Activated T-helper 2 cell treated with anti-CD3 and anti-CD28 coated beads, Interferon-gamma antibody, Interleukin-2, Interleukin-4, amounts not matched to agents 10 μg/mL and 5 μg/mL and 100 μg/mL, durations not matched to agents 14 hours and 24 hours and 36 hours (primary cell): ENCODE measurements at regions of chr1 and their contacts with region 1.

Region 1: GRCh38 chr1:54406339-54407153 is at the start of gene SSBP3:
- DNase-seq: peak; percentile 91
- H3K4me3 Mint-ChIP-seq: peak within 1 kb of the TSS; percentile 90
- H3K27ac Mint-ChIP-seq: peak within 1 kb of the TSS; percentile 94
- H3K4me1 Mint-ChIP-seq: peaks cover 58% of the 10 kb centered on the region
- H3K27me3 Mint-ChIP-seq: no peaks in the 10 kb centered on the region
- total RNA-seq, gene SSBP3: 84.4 and 89.9 TPM in 2 replicates

Region 2: DNA sequence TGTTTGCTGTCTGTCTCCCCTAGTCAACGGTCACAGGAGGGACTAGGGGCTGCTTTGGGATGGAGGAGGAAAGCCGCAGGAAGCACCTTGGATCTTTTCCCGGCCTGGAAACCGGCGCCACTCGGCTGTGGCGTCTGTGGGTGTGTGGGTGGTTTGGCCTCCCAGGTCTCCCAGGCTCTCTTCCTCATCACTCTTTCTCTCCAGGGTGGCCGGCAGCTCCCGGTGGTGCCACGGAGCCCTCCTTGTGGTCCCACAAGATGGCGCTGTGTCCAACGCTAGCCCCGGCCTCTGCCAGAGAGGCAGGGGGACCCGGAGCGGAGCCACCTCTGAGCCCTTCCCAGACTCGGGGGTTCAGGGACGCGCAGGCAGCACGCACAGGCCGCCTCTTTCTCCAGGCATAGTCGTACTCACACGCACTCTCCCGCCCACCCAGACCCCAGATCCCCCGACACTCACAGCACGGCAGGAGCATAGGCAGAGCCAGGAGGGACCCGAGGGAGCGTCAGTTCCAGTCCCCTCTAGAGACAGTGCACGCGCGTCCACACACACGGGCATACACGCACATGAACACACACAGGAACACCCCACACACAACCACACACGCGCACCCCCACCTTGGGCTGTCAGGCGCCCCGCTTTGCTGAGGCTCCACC is 284.9 kb before region 1 on chr1:
- intact Hi-C with region 1: loop called (anchors 2 kb)
- DNase-seq: peak; percentile 55
- H3K4me3 Mint-ChIP-seq: no peak overlapping the region
- H3K27ac Mint-ChIP-seq: no peak overlapping the region
- H3K4me1 Mint-ChIP-seq: peaks cover 2% of the 10 kb centered on the region
- H3K27me3 Mint-ChIP-seq: peaks cover 2% of the 10 kb centered on the region

Region 3: GRCh38 chr1:54287176-54287650 is 119.3 kb before region 1 on chr1:
- intact Hi-C with region 1: loop called (anchors 1 kb)
- DNase-seq: peak; percentile 77
- H3K4me3 Mint-ChIP-seq: peak overlapping the region; percentile 74
- H3K27ac Mint-ChIP-seq: peak overlapping the region; percentile 96
- H3K4me1 Mint-ChIP-seq: peaks cover 72% of the 10 kb centered on the region
- H3K27me3 Mint-ChIP-seq: no peaks in the 10 kb centered on the region

Region 4: DNA sequence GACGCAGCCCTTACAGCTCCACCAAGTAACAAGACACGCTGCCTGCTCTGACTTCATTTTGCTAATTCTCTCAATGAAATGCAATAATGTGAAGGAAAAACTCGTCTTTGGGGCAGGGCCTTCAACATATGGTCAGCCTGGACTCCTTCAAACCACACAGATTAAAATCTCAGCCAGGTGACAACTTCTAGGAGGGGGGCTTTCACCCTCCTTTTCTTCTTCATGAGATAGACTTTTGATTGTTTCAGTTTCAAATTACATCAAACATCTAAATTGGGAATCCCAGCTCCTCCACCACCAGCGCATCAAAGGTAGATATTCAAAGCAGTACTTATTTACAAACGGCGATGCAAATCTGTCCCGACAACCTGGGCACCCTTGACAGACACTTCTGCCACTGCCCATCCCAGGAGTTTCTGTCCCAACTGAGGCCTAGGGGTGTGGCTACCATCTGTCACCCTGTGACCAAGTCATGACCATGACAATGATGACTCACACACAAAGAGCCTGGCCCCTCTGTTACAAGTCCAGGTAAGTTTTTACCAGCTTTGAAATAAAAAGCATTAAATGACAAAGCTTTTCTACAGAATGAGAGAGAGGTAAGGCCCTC is 30.0 kb before region 1 on chr1:
- intact Hi-C with region 1: loop called (anchors 1 kb)
- DNase-seq: no peak
- H3K4me3 Mint-ChIP-seq: no peak overlapping the region
- H3K27ac Mint-ChIP-seq: peak overlapping the region; percentile 72
- H3K4me1 Mint-ChIP-seq: peaks cover 41% of the 10 kb centered on the region
- H3K27me3 Mint-ChIP-seq: no peaks in the 10 kb centered on the region

Region 5: GRCh38 chr1:54498383-54499101 is 92.0 kb after region 1 on chr1:
- intact Hi-C with region 1: no loop called
- DNase-seq: no peak
- H3K4me3 Mint-ChIP-seq: peak overlapping the region; percentile 53
- H3K27ac Mint-ChIP-seq: no peak overlapping the region
- H3K4me1 Mint-ChIP-seq: peaks cover 7% of the 10 kb centered on the region
- H3K27me3 Mint-ChIP-seq: peaks cover 55% of the 10 kb centered on the region

Region 6: DNA sequence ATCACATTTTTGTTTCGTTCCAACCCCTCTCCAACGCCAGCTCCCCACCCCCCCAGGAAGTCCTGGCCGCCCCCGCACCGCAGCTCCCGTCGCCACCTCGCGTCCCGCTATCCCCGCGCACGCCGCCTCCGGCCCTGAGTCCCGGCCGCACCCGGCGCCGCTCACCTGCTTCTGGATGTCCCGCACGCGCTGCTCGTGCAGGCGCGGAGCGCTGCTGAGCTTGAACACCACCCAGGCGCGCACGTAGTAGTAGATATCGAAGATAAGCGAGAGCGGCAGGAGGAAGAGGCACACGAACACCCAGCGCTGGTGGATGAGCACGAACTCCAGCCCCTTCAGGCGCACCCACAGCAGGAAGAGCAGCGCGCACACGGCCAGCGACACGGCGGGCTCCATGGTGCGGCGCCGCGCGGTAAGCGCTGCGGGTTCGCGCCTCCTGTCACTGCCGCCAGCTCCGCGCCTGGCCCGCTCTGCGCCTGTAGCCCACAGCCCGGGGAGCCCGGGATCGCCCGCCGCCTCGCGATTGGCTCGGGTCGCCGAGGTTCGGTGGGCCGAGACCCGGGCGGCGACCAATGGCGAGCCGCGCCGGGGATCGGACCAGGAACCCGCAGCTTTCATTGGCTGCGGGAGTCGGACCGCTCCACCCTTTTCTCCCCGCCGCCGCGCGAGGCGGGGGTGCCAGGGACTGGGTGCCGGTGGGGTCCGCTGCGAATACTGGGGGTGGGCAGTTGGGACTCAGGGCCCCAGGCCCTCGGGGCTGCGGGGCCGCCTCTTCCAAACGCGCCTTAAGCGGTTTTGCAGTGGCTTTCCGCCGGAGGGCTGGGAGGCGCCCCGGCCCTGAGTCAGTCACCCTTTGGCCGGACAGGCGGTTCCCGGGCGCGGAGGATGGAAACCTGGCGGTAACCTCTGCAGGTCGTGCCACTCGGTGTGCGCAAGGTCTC is 480.4 kb after region 1 on chr1 and contains the start of gene DHCR24:
- intact Hi-C with region 1: loop called (anchors 2 kb)
- DNase-seq: peak; percentile 85
- H3K4me3 Mint-ChIP-seq: peak within 1 kb of the TSS; percentile 93
- H3K27ac Mint-ChIP-seq: peak within 1 kb of the TSS; percentile 89
- H3K4me1 Mint-ChIP-seq: peaks cover 49% of the 10 kb centered on the region
- H3K27me3 Mint-ChIP-seq: peaks cover 10% of the 10 kb centered on the region
- total RNA-seq, gene DHCR24: 223 and 231 TPM in 2 replicates